ENCODE measurements at regions of chr10 and their contacts with region 1.

Region 1: DNA sequence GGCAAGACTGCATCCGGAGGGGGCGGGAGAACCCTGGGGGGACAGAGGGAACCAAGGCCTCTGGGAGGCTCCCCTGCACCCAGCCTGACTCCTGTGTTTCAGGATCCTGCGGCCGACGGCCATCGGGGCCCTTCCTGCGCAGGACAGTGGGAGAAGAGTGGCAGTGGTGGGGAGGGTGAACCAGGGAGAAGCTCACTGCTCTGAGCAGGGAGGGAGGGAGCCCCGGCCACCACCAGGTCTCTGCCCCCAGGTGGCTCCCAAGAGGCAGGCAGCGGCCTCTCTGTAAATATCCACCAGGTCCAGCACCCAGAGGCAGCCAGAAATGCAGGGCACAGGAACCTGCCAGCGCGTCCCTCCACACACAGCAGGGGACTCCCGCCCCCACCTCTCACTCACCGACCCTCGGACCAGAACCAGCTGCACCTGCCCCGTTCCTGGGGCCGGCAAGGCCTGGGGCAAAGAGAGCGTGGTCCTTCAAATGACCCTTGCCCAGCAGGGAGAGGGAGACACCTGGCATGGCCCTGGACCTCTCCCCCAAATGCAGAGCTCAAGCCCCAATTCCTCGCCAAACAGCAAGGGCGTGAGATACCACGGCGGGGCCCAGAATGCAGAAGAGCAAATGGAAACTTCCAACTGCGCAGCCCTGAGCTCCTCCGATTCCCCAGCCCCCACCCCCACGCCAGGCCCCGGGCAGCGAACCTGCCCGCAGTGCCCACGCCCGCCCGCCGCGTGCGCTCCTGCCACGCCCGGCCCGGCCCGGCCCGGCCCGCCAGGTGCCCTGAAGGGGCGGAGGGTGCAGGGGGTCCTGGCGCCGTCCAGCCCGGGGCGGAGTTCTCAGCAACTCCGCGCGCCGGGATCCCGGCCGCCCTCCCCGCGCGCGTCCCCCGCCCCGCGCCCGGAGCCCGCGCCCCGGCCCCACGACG is 805 bp downstream of the RASGEF1A start:
- DNase-seq: peak in 8 of 9 experiments; percentile 27 to 71 (median 49)
- ATAC-seq: peak; percentile 78
- H3K4me3 ChIP-seq: peak overlapping the region; percentile 41
- H3K4me3 Mint-ChIP-seq: peak overlapping the region; percentile 81
- H3K27ac ChIP-seq: no peak overlapping the region
- H3K27ac Mint-ChIP-seq: no peak overlapping the region
- H3K4me1 ChIP-seq: peaks cover 6% of the 10 kb centered on the region
- H3K4me1 Mint-ChIP-seq: peaks cover 6% of the 10 kb centered on the region
- H3K27me3 ChIP-seq: peaks cover 14 to 25% of the 10 kb centered on the region in 2 experiments
- H3K27me3 Mint-ChIP-seq: peaks cover 50% of the 10 kb centered on the region
- CTCF ChIP-seq: no peak

Region 2: DNA sequence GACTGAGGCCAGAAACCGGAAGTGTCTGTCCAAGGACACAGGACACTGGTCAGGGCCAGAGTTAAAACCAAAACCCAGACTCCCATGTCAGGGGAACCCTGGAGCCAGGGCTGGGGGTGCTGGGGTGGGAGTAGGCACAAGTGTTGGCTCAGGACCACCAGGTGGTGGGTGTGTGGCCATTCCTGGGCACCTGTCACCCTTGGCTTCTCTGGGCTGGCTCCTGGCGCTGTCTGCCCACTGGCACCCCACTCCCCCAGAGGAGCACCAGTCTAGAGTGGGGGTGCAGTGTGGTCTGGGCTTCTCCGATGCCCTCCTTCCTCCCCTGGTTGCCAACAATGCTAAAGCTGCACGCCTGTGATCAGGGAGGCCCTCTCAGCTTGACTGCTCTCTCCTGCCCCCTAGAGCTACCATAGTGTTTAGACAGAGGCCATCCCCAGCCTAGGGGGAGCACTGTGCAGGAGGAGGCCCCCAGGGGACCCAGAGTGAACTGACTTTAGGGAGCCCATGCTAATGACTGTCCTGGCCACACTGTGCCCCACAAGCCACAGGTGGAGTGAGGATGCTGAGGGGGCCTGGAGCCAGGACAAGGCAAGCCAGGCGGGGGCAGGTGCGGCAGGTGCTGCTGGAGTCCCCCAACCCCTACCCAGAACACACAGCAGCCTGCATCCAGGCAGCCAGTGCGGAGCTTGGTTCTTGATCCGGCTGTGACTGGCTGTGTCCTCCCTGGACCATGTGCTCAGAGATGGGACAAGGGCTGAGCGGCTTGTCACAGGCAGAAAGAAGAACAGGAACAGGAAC is 10.2 kb before region 1 on chr10:
- CTCF ChIA-PET with region 1: interaction called, 11 read pairs
- POLR2A ChIA-PET with region 1: no interaction called
- intact Hi-C with region 1: no loop called
- DNase-seq: peak in 6 of 9 experiments; percentile 46 to 78 (median 56)
- ATAC-seq: peak; percentile 84
- H3K4me3 ChIP-seq: no peak overlapping the region
- H3K4me3 Mint-ChIP-seq: no peak overlapping the region
- H3K27ac ChIP-seq: peak overlapping the region in 1 of 2 experiments; percentile 70
- H3K27ac Mint-ChIP-seq: no peak overlapping the region
- H3K4me1 ChIP-seq: peaks cover 12% of the 10 kb centered on the region
- H3K4me1 Mint-ChIP-seq: peaks cover 8% of the 10 kb centered on the region
- H3K27me3 ChIP-seq: no peaks in the 10 kb centered on the region
- H3K27me3 Mint-ChIP-seq: peaks cover 3% of the 10 kb centered on the region
- CTCF ChIP-seq: peak; percentile 33

Region 3: DNA sequence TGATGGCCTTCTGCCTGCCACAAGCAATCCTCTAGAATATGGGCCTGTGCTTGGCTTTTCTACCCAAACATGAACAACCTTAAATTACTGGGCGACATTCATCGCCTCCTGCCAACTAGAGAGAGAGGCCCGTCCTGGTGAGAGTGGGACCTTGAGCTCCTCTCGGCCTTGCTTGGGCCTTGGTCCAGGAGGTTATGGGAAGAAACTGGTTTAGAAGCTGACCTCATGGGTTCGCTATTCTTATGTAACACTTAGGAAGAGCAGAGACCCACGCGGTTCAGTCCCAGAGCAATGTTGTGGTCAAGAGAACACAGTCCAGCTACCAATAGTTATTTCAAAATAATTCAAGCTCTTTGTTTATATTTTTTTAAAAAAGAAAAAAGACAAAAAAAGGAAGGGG is 558.9 kb after region 1 on chr10:
- CTCF ChIA-PET with region 1: no interaction called
- POLR2A ChIA-PET with region 1: no interaction called
- intact Hi-C with region 1: loop called in 1 of 2 experiments (anchors 10 kb)
- DNase-seq: no peak
- ATAC-seq: no peak
- H3K4me3 ChIP-seq: no peak overlapping the region
- H3K4me3 Mint-ChIP-seq: no peak overlapping the region
- H3K27ac ChIP-seq: no peak overlapping the region
- H3K27ac Mint-ChIP-seq: no peak overlapping the region
- H3K4me1 ChIP-seq: no peaks in the 10 kb centered on the region
- H3K4me1 Mint-ChIP-seq: peaks cover 7% of the 10 kb centered on the region
- H3K27me3 ChIP-seq: no peaks in the 10 kb centered on the region
- H3K27me3 Mint-ChIP-seq: no peaks in the 10 kb centered on the region
- CTCF ChIP-seq: no peak